IMR-90 (cell line): ENCODE measurements at regions of chr3 and their contacts with region 1.

Region 1: GRCh38 chr3:97901313-97902248 is 70.7 kb downstream of the RIOX2 start:
- DNase-seq: no peak
- ATAC-seq: peak; percentile 29
- H3K4me3 ChIP-seq: no peak overlapping the region
- H3K27ac ChIP-seq: no peak overlapping the region
- H3K4me1 ChIP-seq: 0 out of 2 replicates have a peak, but pooled peaks cover 3% of the 10 kb centered on the region
- H3K27me3 ChIP-seq: no peaks in the 10 kb centered on the region
- CTCF ChIP-seq: no peak
- POLR2A ChIP-seq: no peak
- RAD21 ChIP-seq: no peak

Region 2: DNA sequence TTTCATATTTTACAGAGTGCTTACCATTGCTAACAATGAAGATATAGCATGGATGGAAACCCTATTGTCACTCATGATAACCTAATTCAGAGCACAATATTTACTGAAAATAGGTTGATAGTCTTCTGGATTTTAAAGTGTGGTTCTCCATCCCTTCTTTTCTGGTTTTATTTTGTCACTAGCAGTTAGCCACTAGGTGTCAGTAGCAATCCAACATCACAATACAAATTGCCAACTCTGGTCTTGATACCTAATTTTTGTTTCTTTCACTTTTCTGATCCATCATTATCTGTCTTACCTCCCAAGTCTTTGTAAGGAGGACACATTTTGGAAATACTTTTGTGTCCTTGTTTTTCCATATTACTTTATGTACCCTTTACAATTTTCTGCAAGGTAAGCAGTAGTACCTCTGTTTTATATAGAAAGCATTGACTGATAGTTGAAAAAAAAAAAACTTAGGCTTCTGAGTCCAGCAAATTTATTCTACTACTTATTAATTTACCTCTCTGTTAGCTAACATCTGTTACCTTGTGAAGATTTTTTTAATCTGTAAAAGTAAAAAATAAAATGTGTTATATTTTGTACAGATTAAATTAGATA is 108.1 kb before region 1 on chr3:
- CTCF ChIA-PET with region 1: interaction called, 10 read pairs
- POLR2A ChIA-PET with region 1: no interaction called
- dilution Hi-C with region 1: no loop called
- in situ Hi-C with region 1: no loop called
- intact Hi-C with region 1: no loop called
- DNase-seq: peak; percentile 64
- ATAC-seq: peak; percentile 65
- H3K4me3 ChIP-seq: no peak overlapping the region
- H3K27ac ChIP-seq: no peak overlapping the region
- H3K4me1 ChIP-seq: no peaks in the 10 kb centered on the region
- H3K27me3 ChIP-seq: no peaks in the 10 kb centered on the region
- CTCF ChIP-seq: peak; percentile 91
- POLR2A ChIP-seq: no peak
- RAD21 ChIP-seq: peak; percentile 89